ENCODE measurements at regions of chr22 and their contacts with region 1.

Region 1: GRCh38 chr22:23591201-23591791 is 11.2 kb upstream of the IGLL1 start:
- DNase-seq: peak; percentile 26 to 59
- ATAC-seq: peak in 5 of 8 donors; percentile 65 to 70 (median 67)
- H3K4me3 ChIP-seq: no peak overlapping the region
- H3K27ac ChIP-seq: no peak overlapping the region
- H3K4me1 ChIP-seq: no peaks in the 10 kb centered on the region
- H3K27me3 ChIP-seq: peaks cover 0 to 8% (median 0%) of the 10 kb centered on the region in 7 donors
- CTCF ChIP-seq: peak; percentile 54 to 85 (median 79)

Region 2: GRCh38 chr22:23315341-23315917 is 275.9 kb before region 1 on chr22:
- intact Hi-C with region 1: loop called in 1 of 10 experiments (anchors 10 kb)
- DNase-seq: peak; percentile 43 to 77
- ATAC-seq: peak in 2 of 8 donors; percentile 17 to 75
- H3K4me3 ChIP-seq: no peak overlapping the region
- H3K27ac ChIP-seq: peak overlapping the region in 2 of 10 donors; percentile 26 to 41
- H3K4me1 ChIP-seq: peaks cover 0 to 8% (median 0%) of the 10 kb centered on the region in 9 donors
- H3K27me3 ChIP-seq: no peaks in the 10 kb centered on the region
- CTCF ChIP-seq: peak; percentile 58 to 81 (median 66)

Region 3: DNA sequence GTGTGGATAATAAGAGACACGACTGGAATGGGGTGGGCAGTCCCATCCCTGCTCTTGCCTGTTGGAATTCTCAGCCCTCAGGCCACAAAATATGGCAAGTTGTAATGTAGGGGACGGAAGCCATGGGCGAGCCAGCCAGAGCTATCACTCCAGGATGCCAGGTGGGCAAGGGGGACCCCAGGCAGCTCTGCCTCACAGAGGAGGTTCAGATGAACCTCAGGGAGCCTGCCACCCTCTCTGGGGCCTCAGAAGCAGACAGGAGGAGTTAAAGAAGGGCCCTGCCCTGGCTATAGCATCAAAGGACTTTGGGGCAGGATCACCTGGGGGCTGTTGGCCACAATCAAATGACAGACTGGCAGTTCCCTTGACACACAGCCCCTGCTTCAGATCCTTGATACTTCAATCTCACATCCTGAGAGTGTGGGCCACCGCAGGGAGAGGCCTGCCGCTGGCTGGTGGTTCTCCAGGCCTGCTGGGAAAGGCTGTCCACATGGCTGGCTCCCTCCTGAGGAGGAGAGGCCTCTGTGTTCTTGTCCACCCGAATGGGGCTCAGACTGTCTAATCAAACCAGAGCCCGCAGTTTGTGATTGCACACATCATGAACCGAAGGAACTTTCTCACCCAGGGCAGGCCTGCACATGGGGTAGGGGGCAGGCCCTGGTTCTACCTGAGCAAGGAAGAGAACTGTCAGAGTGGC is 42.6 kb before region 1 on chr22:
- intact Hi-C with region 1: loop called in 6 of 10 experiments (anchors 5 to 10 kb)
- DNase-seq: no peak
- ATAC-seq: no peak
- H3K4me3 ChIP-seq: no peak overlapping the region
- H3K27ac ChIP-seq: no peak overlapping the region
- H3K4me1 ChIP-seq: no peaks in the 10 kb centered on the region
- H3K27me3 ChIP-seq: peaks cover 0 to 12% (median 3%) of the 10 kb centered on the region in 7 donors
- CTCF ChIP-seq: no peak

Region 4: DNA sequence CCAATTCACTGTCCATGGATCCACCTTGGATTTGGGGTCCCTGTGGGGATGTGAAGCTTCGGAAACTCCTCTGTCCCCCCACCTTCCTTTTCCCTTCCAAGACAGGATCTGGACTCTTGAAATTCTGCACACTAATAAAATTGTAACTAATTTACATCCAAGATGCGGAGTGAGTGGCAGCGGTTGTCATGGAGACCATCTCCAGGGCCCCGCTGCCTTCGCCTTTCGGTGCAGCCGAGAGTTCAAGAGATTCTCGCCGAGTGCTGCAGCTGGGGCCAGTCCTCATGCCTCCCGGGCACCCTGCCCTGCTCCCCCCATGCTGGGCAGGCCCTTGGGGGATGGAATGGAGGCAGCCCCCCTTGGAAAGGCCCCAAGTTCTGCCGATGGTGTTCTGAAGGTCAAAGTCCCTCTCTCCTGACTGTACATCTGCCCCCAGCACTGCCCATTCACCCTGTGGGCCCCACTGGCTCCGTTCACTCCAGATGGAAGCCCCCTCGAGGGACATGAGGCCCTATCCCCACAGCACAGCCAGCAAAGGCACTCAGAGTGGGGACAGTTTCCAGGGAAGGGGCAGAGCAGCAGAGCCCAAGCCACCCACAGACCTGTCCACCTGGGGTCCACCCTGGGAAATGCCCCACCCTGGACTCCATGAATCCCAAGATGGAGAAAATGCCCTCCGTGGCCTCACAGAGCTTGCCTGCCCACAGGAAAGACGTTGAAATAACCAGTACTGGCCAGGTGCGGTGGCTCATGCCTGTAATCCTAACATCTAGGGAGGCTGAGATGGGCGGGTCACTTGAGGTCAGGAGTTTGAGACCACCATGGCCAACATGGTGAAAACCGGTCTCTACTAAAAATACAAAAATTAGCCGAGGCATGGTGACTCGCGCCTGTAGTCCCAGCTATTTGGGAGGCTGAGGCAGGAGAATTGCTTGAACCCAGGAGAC is 37.1 kb before region 1 on chr22:
- intact Hi-C with region 1: loop called in 3 of 10 experiments (anchors 5 to 10 kb)
- DNase-seq: no peak
- ATAC-seq: no peak
- H3K4me3 ChIP-seq: no peak overlapping the region
- H3K27ac ChIP-seq: no peak overlapping the region
- H3K4me1 ChIP-seq: no peaks in the 10 kb centered on the region
- H3K27me3 ChIP-seq: peaks cover 0 to 50% (median 36%) of the 10 kb centered on the region in 7 donors
- CTCF ChIP-seq: no peak

Region 5: GRCh38 chr22:23649071-23649501 is 57.8 kb after region 1 on chr22:
- intact Hi-C with region 1: no loop called
- DNase-seq: no peak
- ATAC-seq: no peak
- H3K4me3 ChIP-seq: no peak overlapping the region
- H3K27ac ChIP-seq: no peak overlapping the region
- H3K4me1 ChIP-seq: no peaks in the 10 kb centered on the region
- H3K27me3 ChIP-seq: no peaks in the 10 kb centered on the region
- CTCF ChIP-seq: no peak

Region 6: DNA sequence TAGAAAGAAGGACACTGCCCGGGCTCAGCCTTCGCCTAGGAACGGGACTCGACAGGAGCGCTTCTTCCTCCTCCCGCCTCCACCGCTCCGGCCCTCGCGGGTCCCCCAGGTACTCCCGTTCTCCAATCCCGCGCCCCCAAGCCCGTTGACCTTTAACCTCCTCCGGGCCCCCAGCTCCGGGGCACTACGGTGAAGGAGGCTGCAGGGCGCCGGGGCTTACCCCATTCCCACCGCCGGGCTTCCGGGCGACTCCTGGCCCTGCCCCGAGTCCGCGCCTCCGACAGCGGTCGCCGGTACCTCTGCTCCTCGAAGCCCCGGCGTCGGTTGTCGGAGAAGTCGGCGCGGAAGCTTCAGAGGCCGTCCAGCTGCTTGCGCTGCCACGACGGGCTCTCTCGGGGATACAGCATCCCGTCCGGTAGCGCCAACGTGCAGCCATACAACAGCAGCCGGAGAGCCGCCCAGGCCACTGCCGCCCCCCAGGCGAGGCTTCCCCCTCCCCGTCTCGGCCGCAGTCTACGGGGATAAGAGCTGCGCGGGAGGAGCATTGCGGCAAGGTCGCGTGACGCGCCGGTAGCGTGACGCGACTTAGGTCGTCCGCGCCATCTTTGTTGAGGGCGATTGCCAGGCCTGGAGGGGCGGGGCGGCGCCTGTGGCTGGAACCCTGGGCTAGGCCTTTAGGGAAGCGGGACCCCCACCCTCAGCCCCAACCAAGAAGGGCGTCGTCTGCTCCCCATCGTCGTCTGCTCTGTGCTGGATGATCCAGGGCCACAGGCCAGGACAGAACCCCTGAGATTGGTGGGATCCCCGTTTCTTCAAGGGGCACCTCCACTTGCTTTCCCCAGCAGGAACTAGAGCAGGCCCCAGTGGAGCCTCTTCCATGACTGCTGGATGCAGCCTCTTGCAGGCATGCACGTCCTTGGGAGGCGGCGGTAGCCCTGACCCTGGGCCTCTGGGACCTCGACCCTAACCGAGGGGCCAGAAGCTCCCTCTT is 125.8 kb after region 1 on chr22:
- intact Hi-C with region 1: no loop called
- DNase-seq: peak; percentile 85 to 90
- ATAC-seq: peak; percentile 93 to 98 (median 97)
- H3K4me3 ChIP-seq: peak overlapping the region; percentile 54 to 91 (median 78)
- H3K27ac ChIP-seq: peak overlapping the region; percentile 23 to 84 (median 68)
- H3K4me1 ChIP-seq: peaks cover 0 to 22% (median 13%) of the 10 kb centered on the region in 9 donors
- H3K27me3 ChIP-seq: no peaks in the 10 kb centered on the region
- CTCF ChIP-seq: peak in 1 of 9 donors; percentile 5

Region 7: GRCh38 chr22:25437414-25438160 is 1846.3 kb after region 1 on chr22:
- intact Hi-C with region 1: loop called in 1 of 10 experiments (anchors 10 kb)
- DNase-seq: no peak
- ATAC-seq: peak in 1 of 8 donors; percentile 59
- H3K4me3 ChIP-seq: no peak overlapping the region
- H3K27ac ChIP-seq: no peak overlapping the region
- H3K4me1 ChIP-seq: no peaks in the 10 kb centered on the region
- H3K27me3 ChIP-seq: peaks cover 0 to 5% (median 0%) of the 10 kb centered on the region in 7 donors
- CTCF ChIP-seq: no peak

Measured in heart right ventricle (tissue), 16 donors.